Activated T-helper 1 cell treated with anti-CD3 and anti-CD28 coated beads, Interleukin-12 subunit alpha, Interleukin-12 subunit beta, Interleukin-2, Interleukin-4 antibody, amounts not matched to agents 30 ng/mL and 10 ng/mL and 1 ng/mL, durations not matched to agents 14 hours and 24 hours and 36 hours (primary cell): ENCODE measurements at regions of chr1 and their contacts with region 1.

Region 1: GRCh38 chr1:192936313-192937018 is 122.7 kb downstream of the UCHL5 start:
- DNase-seq: no peak
- H3K4me3 Mint-ChIP-seq: peak overlapping the region; percentile 9
- H3K27ac Mint-ChIP-seq: peak overlapping the region; percentile 85
- H3K4me1 Mint-ChIP-seq: peaks cover 41% of the 10 kb centered on the region
- H3K27me3 Mint-ChIP-seq: no peaks in the 10 kb centered on the region

Region 2: GRCh38 chr1:192516776-192517297 is 419.6 kb before region 1 on chr1:
- intact Hi-C with region 1: loop called (anchors 1 kb)
- DNase-seq: peak; percentile 67
- H3K4me3 Mint-ChIP-seq: peak overlapping the region; percentile 79
- H3K27ac Mint-ChIP-seq: peak overlapping the region; percentile 92
- H3K4me1 Mint-ChIP-seq: peaks cover 58% of the 10 kb centered on the region
- H3K27me3 Mint-ChIP-seq: peaks cover 4% of the 10 kb centered on the region

Region 3: GRCh38 chr1:192904438-192904895 is 32.0 kb before region 1 on chr1:
- intact Hi-C with region 1: loop called (anchors 5 kb)
- DNase-seq: no peak
- H3K4me3 Mint-ChIP-seq: peak overlapping the region; percentile 9
- H3K27ac Mint-ChIP-seq: no peak overlapping the region
- H3K4me1 Mint-ChIP-seq: no peaks in the 10 kb centered on the region
- H3K27me3 Mint-ChIP-seq: peaks cover 12% of the 10 kb centered on the region

Region 4: DNA sequence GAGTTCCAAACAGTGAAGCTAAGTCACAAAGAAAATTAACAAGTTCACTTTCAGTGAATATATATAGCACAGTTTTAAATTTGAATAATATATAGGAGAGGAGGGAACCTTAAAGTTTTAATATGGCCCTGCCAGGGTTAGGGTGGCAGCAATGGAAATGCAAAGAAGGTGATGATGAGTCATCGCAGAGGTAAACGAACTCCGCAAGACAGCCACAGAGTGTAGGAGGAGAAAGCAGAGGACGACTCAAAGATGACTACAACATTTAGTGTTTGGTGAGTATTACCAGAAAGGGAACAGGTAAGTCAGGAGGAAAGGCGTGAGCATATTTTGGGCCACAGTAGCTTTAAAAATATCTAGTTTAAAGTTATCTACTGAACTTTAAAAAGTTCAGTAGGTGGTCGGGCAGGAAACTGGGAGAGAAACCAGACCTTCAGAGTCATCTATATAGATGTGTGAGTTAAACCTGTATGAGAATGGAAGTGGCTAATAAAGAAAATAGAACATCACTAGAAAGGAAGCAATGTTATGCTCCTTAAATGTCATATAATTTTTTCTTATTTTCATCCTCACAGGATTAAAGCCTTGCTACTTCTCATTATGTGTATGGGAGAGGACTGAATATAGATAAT is 47.0 kb after region 1 on chr1:
- intact Hi-C with region 1: loop called (anchors 1 kb)
- DNase-seq: no peak
- H3K4me3 Mint-ChIP-seq: peak overlapping the region; percentile 41
- H3K27ac Mint-ChIP-seq: peak overlapping the region; percentile 88
- H3K4me1 Mint-ChIP-seq: peaks cover 56% of the 10 kb centered on the region
- H3K27me3 Mint-ChIP-seq: no peaks in the 10 kb centered on the region

Region 5: DNA sequence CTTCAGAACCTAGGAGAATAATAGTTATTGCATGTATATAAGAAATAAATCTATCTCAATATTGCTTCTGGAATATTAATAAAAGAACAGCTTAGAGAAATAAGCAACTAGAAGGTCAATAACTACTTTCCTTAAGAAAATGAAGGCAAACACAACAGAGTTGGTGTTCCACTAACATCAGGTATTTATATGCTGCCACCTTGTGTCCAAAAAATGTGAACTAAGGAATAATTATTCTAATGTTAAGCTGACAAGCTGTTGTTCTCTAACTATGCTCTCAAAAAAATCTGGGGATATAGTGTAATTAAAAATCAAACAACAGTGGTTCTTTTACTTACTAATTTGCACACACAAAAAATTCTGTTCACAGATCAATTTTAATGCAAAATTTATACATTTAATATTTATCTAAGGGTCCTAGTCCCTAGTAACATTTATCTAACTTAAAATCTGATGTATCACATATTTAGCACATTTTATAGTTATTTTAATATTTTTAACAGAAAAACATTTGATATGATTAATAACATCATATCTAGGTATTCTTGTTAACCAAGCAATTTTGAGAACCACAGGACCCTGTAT is 83.1 kb after region 1 on chr1:
- intact Hi-C with region 1: loop called (anchors 2 kb)
- DNase-seq: no peak
- H3K4me3 Mint-ChIP-seq: no peak overlapping the region
- H3K27ac Mint-ChIP-seq: no peak overlapping the region
- H3K4me1 Mint-ChIP-seq: no peaks in the 10 kb centered on the region
- H3K27me3 Mint-ChIP-seq: no peaks in the 10 kb centered on the region

Region 6: DNA sequence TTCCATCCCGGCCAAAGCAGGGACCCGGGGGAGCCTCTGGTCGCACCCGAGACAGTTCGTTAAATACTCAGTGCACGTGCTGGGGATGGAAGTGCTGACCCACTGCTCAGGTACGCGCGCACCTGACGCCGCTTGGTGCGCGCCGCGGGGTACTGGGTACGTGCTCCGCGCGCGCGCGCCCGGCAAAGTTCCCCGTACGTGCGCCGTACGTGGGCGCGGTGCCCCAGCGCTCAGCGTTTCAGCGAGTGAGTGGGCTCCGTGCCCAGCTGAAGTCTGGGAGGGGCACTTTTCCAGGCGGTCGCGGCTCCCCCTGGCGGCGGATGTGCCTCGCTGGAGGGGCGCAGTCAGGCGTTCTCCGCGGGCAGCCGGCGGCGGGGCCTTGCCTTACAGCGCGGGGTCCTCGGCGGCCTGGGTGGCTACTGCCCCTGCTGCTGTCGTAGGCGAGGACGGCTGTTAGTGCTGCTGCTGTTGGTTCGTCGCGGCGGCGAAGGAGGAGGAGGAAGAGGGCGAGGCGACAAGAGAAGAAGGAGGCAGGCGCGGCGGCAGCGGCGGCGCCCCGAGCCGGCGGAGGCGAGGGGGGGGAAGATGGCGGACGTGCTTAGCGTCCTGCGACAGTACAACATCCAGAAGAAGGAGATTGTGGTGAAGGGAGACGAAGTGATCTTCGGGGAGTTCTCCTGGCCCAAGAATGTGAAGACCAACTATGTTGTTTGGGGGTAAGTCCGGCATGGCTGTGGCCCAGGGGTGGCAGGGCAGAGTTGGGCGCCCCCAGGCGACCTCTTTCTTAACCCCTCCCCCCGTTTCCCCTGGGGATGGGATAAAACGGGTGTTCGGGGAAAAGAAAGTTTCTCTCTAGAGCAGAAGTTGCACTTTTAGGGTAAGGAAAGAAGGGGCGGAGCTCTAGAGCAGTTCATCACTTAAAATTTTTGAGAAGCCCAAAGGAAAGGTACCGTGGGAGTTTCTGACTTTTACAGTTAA is 185.4 kb after region 1 on chr1 and contains the start of gene CDC73:
- intact Hi-C with region 1: loop called (anchors 2 kb)
- DNase-seq: peak; percentile 97
- H3K4me3 Mint-ChIP-seq: peak within 1 kb of the TSS; percentile 92
- H3K27ac Mint-ChIP-seq: peak within 1 kb of the TSS; percentile 88
- H3K4me1 Mint-ChIP-seq: peaks cover 62% of the 10 kb centered on the region
- H3K27me3 Mint-ChIP-seq: peaks cover 15% of the 10 kb centered on the region
- total RNA-seq, gene CDC73: 56.1 and 57.3 TPM in 2 replicates